A673 (cell line): ENCODE measurements at regions of chr7 and their contacts with region 1.

Region 1: DNA sequence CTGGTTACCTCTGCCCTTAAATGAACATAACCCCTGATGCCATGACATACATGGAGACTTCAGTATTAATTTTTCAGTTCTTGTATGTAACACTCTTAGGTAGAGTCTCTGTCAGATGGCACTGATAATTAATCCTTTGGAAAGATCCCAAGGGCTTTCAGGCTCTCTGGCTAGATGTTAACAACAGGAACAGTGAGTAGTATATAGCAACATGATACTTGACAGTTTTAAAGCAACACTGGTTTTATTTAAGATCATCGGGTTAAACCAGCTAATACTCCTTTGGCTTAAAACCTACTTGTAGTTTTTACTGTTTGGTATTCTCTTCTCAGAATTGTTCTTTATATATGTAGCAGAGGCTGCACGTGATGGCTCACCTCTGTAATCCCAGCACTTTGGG is 27.3 kb downstream of the AHCYL2 start:
- DNase-seq: peak; percentile 55
- H3K4me3 ChIP-seq: no peak overlapping the region
- H3K27ac ChIP-seq: no peak overlapping the region
- H3K4me1 ChIP-seq: peaks cover 15% of the 10 kb centered on the region
- H3K27me3 ChIP-seq: no peaks in the 10 kb centered on the region
- CTCF ChIP-seq: no peak

Region 2: DNA sequence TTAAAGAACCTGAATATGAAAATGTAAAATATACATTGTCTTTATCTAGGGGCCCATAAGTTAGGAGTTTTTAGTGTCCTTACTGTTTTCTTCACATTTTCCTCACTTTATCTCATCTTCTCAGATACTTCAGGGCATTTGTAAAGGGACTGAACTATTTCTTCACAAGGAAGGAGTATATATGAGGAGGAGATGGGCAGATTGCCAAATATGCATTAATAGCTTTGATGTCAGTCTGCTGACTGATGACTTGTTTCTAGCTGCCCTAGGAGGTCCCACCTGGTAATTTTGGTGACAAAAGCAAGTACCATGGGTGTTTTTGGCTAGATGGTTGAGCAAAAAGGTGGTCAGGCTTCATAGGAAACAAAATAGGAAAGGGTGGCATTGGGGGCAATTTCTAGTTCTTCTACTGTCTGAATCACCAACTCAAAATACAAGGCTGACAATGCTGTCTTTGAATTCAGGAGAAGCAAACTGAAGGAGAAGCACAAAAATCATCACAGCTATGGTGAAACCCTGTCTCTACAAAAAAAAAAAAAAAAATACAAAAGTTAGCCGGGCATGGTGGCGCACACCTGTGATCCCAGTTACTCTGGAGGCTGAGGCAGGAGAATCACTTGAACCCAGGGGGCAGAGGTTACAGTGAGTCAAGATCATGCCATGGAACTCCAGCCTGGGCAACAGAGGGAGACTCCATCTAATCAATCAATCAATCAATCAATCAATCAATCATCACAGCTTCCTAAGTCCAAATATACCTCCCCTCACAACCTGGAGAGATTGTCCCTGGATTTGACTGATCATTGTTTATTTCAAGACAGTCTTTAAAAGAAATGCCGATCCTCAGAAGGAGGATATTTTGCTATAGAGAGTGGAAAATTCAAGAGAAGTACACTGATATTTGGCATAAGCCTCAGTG is 171.8 kb after region 1 on chr7:
- CTCF ChIA-PET with region 1: no interaction called
- POLR2A ChIA-PET with region 1: interaction called, 25 read pairs
- intact Hi-C with region 1: no loop called
- DNase-seq: peak; percentile 37
- H3K4me3 ChIP-seq: no peak overlapping the region
- H3K27ac ChIP-seq: no peak overlapping the region
- H3K4me1 ChIP-seq: peaks cover 30% of the 10 kb centered on the region
- H3K27me3 ChIP-seq: no peaks in the 10 kb centered on the region
- CTCF ChIP-seq: no peak

Region 3: GRCh38 chr7:130096243-130096827 is 844.2 kb after region 1 on chr7:
- CTCF ChIA-PET with region 1: no interaction called
- POLR2A ChIA-PET with region 1: no interaction called
- intact Hi-C with region 1: no loop called
- DNase-seq: peak; percentile 36
- H3K4me3 ChIP-seq: no peak overlapping the region
- H3K27ac ChIP-seq: no peak overlapping the region
- H3K4me1 ChIP-seq: no peaks in the 10 kb centered on the region
- H3K27me3 ChIP-seq: no peaks in the 10 kb centered on the region
- CTCF ChIP-seq: peak; percentile 53